Mammary epithelial cell (primary cell): ENCODE measurements at regions of chrX and their contacts with region 1.

Region 1: GRCh38 chrX:48751343-48751742 is 10.2 kb upstream of the GLOD5 start:
- DNase-seq: no peak
- H3K4me3 ChIP-seq: no peak overlapping the region
- H3K27ac ChIP-seq: no peak overlapping the region
- H3K4me1 ChIP-seq: no peaks in the 10 kb centered on the region
- H3K27me3 ChIP-seq: no peaks in the 10 kb centered on the region
- CTCF ChIP-seq: no peak

Region 2: GRCh38 chrX:49147936-49148335 is 396.6 kb after region 1 on chrX:
- CTCF ChIA-PET with region 1: no interaction called
- dilution Hi-C with region 1: no loop called
- in situ Hi-C with region 1: no loop called
- intact Hi-C with region 1: no loop called
- DNase-seq: no peak
- H3K4me3 ChIP-seq: no peak overlapping the region
- H3K27ac ChIP-seq: no peak overlapping the region
- H3K4me1 ChIP-seq: no peaks in the 10 kb centered on the region
- H3K27me3 ChIP-seq: no peaks in the 10 kb centered on the region
- CTCF ChIP-seq: no peak

Region 3: DNA sequence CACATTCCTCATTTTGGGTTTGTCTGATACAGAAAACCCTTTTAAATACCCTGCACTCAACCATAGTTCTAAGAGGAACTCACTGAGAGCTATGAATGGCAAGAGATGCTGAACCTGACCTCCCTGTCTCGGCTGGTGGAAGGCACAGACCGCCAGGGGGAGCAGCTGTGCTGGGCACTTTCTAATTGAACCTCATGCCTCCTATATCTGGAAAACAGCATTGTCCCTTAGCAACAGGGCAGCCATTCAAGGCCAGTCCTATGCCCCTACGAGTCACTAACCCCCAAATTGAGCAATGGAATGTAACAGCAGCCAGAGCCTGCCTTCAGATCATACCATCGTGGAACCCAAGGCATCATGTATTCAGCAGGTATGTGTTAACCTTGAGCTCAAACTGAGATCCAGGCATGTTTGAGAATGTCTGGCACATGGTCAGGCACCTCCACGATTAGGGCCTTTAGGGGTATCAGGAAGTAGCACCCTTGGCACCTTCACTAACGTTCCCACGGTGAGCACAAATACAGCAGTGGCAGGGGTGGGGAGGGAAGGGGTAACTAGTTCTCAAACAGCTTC is 1133.0 kb after region 1 on chrX:
- CTCF ChIA-PET with region 1: interaction called, 11 read pairs
- dilution Hi-C with region 1: no loop called
- in situ Hi-C with region 1: no loop called
- intact Hi-C with region 1: no loop called
- DNase-seq: peak; percentile 35
- H3K4me3 ChIP-seq: no peak overlapping the region
- H3K27ac ChIP-seq: peak overlapping the region; percentile 3
- H3K4me1 ChIP-seq: peaks cover 6% of the 10 kb centered on the region
- H3K27me3 ChIP-seq: no peaks in the 10 kb centered on the region
- CTCF ChIP-seq: peak; percentile 83